H1 (cell line): ENCODE measurements at regions of chr9 and their contacts with region 1.

Region 1: DNA sequence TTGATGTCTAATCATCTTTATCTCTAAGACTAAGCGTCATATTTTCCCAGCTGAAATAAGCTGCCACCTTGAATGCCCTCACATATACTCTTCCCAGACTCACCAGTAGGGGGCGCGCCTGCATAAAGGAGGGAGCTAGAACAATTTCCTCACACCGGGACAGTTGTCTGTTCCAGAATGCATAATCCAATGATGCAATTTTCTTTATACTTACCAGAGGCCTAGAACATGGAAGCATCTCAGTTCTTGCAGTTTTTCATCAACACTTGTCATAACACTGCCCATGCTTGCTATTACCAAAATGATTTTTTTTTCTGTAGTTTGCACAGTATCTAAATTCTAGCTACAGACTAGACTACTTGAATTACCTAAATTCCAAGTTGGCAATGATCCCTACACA is 203.9 kb downstream of the FRMD3 start:
- DNase-seq: peak in 1 of 2 experiments; percentile 88
- H3K4me3 ChIP-seq: no peak overlapping the region
- H3K27ac ChIP-seq: no peak overlapping the region
- H3K4me1 ChIP-seq: no peaks in the 10 kb centered on the region
- H3K27me3 ChIP-seq: no peaks in the 10 kb centered on the region
- CTCF ChIP-seq: peak; percentile 66 to 94 (median 88)
- EP300 ChIP-seq: no peak
- POLR2A ChIP-seq: no peak
- RAD21 ChIP-seq: peak; percentile 94 to 95

Region 2: GRCh38 chr9:83166369-83166768 is 168.0 kb before region 1 on chr9:
- CTCF ChIA-PET with region 1: no interaction called
- POLR2A ChIA-PET with region 1: no interaction called
- DNase-seq: no peak
- H3K4me3 ChIP-seq: no peak overlapping the region
- H3K27ac ChIP-seq: no peak overlapping the region
- H3K4me1 ChIP-seq: no peaks in the 10 kb centered on the region
- H3K27me3 ChIP-seq: no peaks in the 10 kb centered on the region
- CTCF ChIP-seq: no peak
- EP300 ChIP-seq: no peak
- POLR2A ChIP-seq: no peak
- RAD21 ChIP-seq: no peak

Region 3: GRCh38 chr9:83281306-83282255 is 52.7 kb before region 1 on chr9:
- CTCF ChIA-PET with region 1: interaction called, 24 read pairs
- POLR2A ChIA-PET with region 1: no interaction called
- DNase-seq: no peak
- H3K4me3 ChIP-seq: no peak overlapping the region
- H3K27ac ChIP-seq: no peak overlapping the region
- H3K4me1 ChIP-seq: no peaks in the 10 kb centered on the region; a peak in 1 of 7 replicates
- H3K27me3 ChIP-seq: no peaks in the 10 kb centered on the region
- CTCF ChIP-seq: no peak
- EP300 ChIP-seq: no peak
- POLR2A ChIP-seq: no peak
- RAD21 ChIP-seq: no peak

Region 4: DNA sequence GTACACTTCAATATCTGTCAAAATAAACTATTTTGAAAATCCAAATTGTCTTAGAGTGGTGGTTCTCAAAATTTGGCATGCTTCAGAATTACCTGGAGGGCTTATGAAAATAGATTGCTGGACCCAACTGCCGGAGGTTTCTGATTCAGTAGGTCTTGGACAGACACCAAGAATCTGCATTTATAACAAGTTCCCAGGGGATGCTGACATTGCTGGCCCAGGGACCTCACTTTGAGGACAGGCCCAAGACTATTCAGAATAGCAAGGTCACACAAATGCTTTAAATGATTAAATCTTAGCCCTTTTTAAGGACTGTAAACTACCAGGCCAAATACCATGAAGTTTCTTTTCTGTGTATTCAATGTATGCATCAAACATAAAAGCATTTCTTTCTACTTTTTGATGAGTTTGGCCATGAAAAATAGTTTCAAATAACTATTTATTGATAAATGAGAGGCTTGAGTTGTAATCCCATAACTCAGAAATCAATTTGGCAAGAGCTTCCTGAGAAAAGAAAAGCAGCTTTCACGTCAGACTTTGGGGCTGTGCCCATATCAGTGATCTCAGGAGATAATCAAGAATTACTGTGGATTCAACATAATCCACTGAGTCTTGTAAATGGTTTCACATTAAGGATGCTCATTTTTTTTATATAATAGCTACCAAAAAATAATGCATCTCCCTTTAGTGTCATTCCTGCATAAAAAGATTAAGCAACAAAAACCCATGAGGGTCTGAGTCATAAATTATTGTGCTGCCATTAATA is 12.5 kb after region 1 on chr9:
- CTCF ChIA-PET with region 1: interaction called, 92 read pairs
- POLR2A ChIA-PET with region 1: no interaction called
- DNase-seq: no peak
- H3K4me3 ChIP-seq: no peak overlapping the region
- H3K27ac ChIP-seq: no peak overlapping the region
- H3K4me1 ChIP-seq: peaks cover 0 to 4% (median 1%) of the 10 kb centered on the region in 4 experiments; a peak in 3 of 7 replicates
- H3K27me3 ChIP-seq: no peaks in the 10 kb centered on the region
- CTCF ChIP-seq: no peak
- EP300 ChIP-seq: no peak
- POLR2A ChIP-seq: no peak
- RAD21 ChIP-seq: no peak

Region 5: DNA sequence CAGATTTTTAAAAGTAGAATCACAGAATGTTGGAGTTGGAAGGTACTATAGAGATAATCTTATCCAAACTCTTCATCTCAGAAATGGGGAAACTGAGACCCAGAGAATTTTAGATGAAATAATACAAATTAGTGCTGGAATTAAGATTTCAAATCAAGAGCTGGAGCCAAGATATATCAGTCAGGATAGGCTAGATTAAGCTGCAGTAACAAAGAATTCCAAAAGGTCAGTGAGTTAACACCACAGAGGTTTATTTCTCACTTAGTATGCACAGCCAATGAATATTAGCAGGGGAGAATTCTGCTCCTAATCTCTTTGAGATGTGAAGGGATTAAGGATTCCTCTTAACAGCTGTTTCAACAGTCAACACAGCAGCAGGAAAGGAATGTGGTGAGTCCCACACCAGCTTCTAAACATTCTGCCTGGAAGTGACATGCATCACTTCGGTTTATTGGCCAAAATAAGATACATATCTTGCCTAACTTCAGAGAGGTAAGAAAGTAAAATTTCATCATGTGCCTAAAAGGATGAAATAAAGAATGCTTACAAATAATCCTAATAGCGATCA is 67.1 kb after region 1 on chr9:
- CTCF ChIA-PET with region 1: interaction called, 17 read pairs
- POLR2A ChIA-PET with region 1: no interaction called
- DNase-seq: no peak
- H3K4me3 ChIP-seq: no peak overlapping the region
- H3K27ac ChIP-seq: no peak overlapping the region
- H3K4me1 ChIP-seq: no peaks in the 10 kb centered on the region
- H3K27me3 ChIP-seq: no peaks in the 10 kb centered on the region
- CTCF ChIP-seq: no peak
- EP300 ChIP-seq: no peak
- POLR2A ChIP-seq: no peak
- RAD21 ChIP-seq: no peak

Region 6: DNA sequence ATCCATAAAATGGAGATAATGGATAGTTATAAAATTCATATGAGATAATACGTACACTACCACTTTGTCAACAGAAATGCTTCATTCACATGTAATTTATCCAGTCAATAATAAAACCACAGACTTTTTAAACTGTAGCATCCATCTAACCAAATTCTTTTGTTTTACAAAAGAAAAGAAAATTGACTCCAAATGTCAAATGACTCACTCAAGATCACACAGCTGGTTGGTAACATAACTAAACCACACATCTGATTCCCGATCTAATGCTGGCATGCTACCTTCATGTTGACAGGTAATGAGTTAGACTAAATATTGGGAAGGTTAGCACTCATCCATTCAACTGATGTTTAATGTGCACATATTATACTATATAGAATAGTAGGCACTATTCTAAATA is 199.0 kb after region 1 on chr9:
- CTCF ChIA-PET with region 1: interaction called, 262 read pairs
- POLR2A ChIA-PET with region 1: no interaction called
- DNase-seq: no peak
- H3K4me3 ChIP-seq: no peak overlapping the region
- H3K27ac ChIP-seq: no peak overlapping the region
- H3K4me1 ChIP-seq: peaks cover 0 to 10% (median 4%) of the 10 kb centered on the region in 4 experiments; a peak in 6 of 7 replicates
- H3K27me3 ChIP-seq: peaks cover 12 to 21% (median 19%) of the 10 kb centered on the region in 4 experiments
- CTCF ChIP-seq: no peak
- EP300 ChIP-seq: no peak
- POLR2A ChIP-seq: no peak
- RAD21 ChIP-seq: no peak

Region 7: GRCh38 chr9:83583151-83584014 is 249.1 kb after region 1 on chr9:
- CTCF ChIA-PET with region 1: interaction called, 16 read pairs
- POLR2A ChIA-PET with region 1: no interaction called
- DNase-seq: peak; percentile 47 to 80
- H3K4me3 ChIP-seq: no peak overlapping the region
- H3K27ac ChIP-seq: no peak overlapping the region
- H3K4me1 ChIP-seq: no peaks in the 10 kb centered on the region; a peak in 2 of 7 replicates
- H3K27me3 ChIP-seq: no peaks in the 10 kb centered on the region
- CTCF ChIP-seq: peak; percentile 22 to 85 (median 67)
- EP300 ChIP-seq: 0 out of 3 replicates have a peak, but pooled peaks of 1 of the 2 experiments have one; percentile 30
- POLR2A ChIP-seq: no peak
- RAD21 ChIP-seq: peak; percentile 59

Region 8: GRCh38 chr9:83649080-83649479 is 314.8 kb after region 1 on chr9:
- CTCF ChIA-PET with region 1: interaction called, 16 read pairs
- POLR2A ChIA-PET with region 1: no interaction called
- DNase-seq: peak; percentile 46 to 89
- H3K4me3 ChIP-seq: no peak overlapping the region
- H3K27ac ChIP-seq: no peak overlapping the region
- H3K4me1 ChIP-seq: peaks cover 0 to 3% (median 0%) of the 10 kb centered on the region in 4 experiments; a peak in 2 of 7 replicates
- H3K27me3 ChIP-seq: no peaks in the 10 kb centered on the region
- CTCF ChIP-seq: peak; percentile 82 to 91 (median 86)
- EP300 ChIP-seq: no peak
- POLR2A ChIP-seq: 0 out of 3 replicates have a peak, but pooled peaks of 1 of the 2 experiments have one; percentile 3
- RAD21 ChIP-seq: peak; percentile 88 to 89